ENCODE measurements at regions of chr1 and their contacts with region 1.

Region 1: DNA sequence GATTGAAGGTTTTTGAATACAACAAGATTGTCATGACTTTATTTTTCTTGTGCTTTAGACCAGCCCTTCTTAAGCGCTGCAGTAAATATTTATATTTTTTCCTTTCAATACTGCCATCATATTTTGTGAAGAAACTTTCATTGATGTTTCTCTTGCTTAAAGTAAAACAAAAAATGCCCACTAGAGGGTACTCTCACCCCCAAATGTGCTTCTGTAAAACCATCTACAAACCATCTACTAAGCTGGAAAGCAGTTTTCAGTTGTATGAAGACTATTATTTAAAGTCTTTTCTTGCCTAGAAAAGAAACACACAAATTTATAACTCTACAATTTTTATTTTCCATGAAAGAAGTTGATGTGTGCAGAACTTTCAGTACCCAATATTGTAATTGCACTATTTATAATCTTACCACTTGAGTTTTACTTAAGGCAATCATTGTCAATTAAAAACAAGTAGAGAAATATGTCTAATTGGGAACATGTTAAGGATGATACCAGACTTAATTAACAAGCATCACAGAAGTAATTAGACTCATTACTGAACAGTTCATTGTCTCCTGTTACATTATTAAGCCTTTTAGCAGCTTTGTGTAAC is 10.7 kb downstream of the LEPR start:
- DNase-seq: no peak
- ATAC-seq: no peak
- H3K4me3 ChIP-seq: no peak overlapping the region
- H3K27ac ChIP-seq: peak overlapping the region in 5 of 12 donors; percentile 53 to 84 (median 59)
- H3K4me1 ChIP-seq: peaks cover 0 to 31% (median 9%) of the 10 kb centered on the region in 12 donors
- H3K27me3 ChIP-seq: no peaks in the 10 kb centered on the region
- CTCF ChIP-seq: peak; percentile 37 to 77 (median 63)
- POLR2A ChIP-seq: no peak

Region 2: DNA sequence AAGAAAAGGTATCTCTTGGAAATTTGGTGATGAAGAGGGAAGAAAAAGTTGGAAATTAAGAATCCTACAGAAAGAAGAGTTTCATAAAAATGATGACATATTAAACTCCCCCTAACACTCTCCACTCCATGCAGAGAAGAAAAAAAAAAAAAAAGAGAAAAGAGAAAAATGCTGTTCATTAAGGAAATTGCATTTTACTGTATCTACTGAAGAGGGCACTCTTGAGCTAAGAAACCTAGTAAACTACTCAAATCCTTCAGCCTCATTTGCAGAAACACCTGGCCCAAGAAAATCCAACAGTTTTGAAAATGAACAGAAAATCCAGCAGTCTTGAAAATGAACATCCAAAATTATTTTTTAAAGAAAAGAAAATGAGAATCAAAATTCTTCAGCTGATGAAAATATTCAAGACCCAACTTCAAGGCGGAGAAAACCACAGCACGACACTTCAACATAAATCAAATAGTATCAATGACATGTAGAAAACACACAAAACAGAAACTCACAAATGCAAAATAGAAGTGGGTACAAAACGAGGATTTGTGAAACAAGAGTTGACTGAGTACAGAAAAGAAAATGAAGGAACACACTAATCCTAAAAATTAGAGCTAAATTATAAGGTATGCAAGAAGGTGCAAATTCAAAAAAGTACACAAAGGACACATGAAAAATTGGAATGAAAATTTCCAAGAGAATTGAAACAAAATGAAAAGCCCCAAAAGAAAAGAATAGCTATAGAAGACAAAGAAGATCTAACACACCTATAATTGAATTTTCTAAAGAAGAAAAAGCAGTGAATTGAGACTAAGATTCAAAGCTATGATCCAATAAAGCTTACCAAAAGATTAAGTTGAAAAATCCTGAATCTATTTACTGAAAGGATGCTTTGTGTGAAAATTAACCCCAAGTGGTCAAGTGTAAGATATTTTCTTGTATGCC is 195.1 kb before region 1 on chr1:
- intact Hi-C with region 1: loop called in 2 of 10 experiments (anchors 5 to 10 kb)
- DNase-seq: no peak
- ATAC-seq: no peak
- H3K4me3 ChIP-seq: no peak overlapping the region
- H3K27ac ChIP-seq: no peak overlapping the region
- H3K4me1 ChIP-seq: peaks cover 0 to 12% (median 0%) of the 10 kb centered on the region in 12 donors
- H3K27me3 ChIP-seq: no peaks in the 10 kb centered on the region
- CTCF ChIP-seq: peak; percentile 42 to 70 (median 57)
- POLR2A ChIP-seq: no peak

Region 3: DNA sequence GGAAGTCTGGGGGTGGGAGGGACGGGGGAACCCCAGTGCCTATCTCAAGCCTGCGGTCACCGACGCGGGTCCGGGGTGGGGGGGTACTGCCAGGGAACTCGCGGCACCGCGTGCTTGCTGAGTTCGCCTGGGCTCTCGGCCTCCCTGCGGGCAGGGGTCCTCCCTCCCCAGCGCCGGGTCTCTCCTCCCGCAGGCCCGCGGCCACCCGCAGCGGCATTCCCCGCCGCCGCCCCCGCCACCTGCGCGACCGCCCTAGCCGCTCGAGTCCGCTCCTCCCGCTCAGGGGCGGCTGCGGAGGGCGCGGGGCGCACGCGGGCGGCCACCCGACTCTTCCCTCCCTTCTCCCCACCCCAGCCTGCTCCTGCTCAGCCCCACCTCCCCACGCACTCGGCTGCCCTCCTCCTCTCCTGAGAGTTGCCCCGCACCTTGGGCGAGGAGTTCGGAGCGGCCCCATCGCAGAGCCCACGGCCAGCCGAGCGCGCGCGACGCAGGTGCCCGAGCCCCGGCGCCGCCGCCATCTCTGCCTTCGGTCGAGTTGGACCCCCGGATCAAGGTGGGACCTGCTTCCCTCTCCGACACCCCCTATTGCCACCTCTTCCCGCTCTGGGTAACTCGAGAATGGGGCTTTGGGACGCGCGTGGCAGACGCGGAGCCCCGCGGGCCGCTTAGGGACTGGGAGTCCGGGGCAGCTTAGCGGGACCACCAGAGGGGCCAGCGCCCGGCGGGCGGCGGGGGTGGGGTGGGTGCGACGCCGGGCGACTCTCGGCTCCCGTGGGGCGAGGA is 94.2 kb after region 1 on chr1:
- intact Hi-C with region 1: loop called in 2 of 10 experiments (anchors 1 to 5 kb)
- DNase-seq: peak in 3 of 5 donors; percentile 9 to 69 (median 25)
- ATAC-seq: peak in 2 of 4 donors; percentile 49 to 75
- H3K4me3 ChIP-seq: peak overlapping the region; percentile 45 to 73 (median 62)
- H3K27ac ChIP-seq: peak overlapping the region in 6 of 12 donors; percentile 12 to 66 (median 44)
- H3K4me1 ChIP-seq: peaks cover 0 to 24% (median 5%) of the 10 kb centered on the region in 12 donors
- H3K27me3 ChIP-seq: peaks cover 0 to 34% (median 7%) of the 10 kb centered on the region in 9 donors
- CTCF ChIP-seq: no peak
- POLR2A ChIP-seq: no peak

Region 4: GRCh38 chr1:65581119-65581518 is 149.9 kb after region 1 on chr1:
- intact Hi-C with region 1: loop called in 3 of 10 experiments (anchors 5 to 10 kb)
- DNase-seq: no peak
- ATAC-seq: no peak
- H3K4me3 ChIP-seq: no peak overlapping the region
- H3K27ac ChIP-seq: no peak overlapping the region
- H3K4me1 ChIP-seq: no peaks in the 10 kb centered on the region
- H3K27me3 ChIP-seq: no peaks in the 10 kb centered on the region
- CTCF ChIP-seq: peak in 10 of 12 donors; percentile 13 to 47 (median 26)
- POLR2A ChIP-seq: no peak